Heart left ventricle (tissue), 16 donors: ENCODE measurements at regions of chr11 and their contacts with region 1.

Region 1: DNA sequence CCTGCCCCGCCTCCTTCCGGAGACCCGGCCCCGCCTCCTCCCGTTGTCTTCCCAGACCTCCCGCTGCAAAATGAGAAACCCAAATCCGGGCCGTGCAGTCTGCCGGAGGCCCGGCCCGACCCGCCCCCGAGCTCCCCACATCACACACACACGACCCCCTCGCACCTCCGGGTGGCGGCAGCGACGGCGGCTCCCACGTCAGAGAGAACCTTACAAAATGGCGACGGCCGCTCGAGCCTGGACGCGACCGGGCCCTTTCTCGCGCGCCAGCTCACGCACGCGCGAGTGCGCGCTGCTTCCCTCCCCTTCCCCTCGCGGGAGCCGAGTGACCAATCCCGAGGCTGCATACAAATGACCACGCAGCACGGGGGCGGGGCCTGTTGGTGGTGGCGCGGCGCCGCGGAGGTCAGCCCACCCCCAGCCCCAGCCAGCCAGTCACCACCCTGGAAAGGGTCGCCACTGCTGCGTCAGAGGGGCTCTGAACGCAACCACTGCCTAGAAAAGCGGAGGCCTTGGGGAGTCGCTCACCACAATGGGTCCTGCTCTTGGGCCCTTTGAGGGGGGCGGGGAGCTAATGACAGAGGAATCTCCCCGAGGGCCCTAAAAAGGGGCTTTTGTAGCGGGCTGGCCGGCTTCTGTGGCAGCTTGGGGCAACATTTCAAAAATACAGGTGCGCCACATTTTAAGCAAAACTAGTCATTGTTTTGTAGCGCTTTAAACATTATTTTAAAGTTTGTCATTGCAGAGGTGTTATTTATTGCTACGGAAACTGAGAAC is at the start of gene RBM4B:
- DNase-seq: peak; percentile 96 to 98 (median 97)
- ATAC-seq: peak; percentile 98 to 99 (median 98)
- H3K4me3 ChIP-seq: peak within 1 kb of the TSS; percentile 56 to 83 (median 72)
- H3K27ac ChIP-seq: peak within 1 kb of the TSS; percentile 84 to 98 (median 92)
- H3K4me1 ChIP-seq: peaks cover 0 to 48% (median 26%) of the 10 kb centered on the region in 12 donors
- H3K27me3 ChIP-seq: no peaks in the 10 kb centered on the region
- CTCF ChIP-seq: no peak
- POLR2A ChIP-seq: peak; percentile 70 to 91
- total RNA-seq, gene RBM4B: 8.4 to 13.3 (median 10.0) TPM

Region 2: GRCh38 chr11:66408488-66409214 is 269.1 kb before region 1 on chr11:
- intact Hi-C with region 1: loop called (anchors 1 to 10 kb)
- DNase-seq: peak; percentile 85 to 92 (median 88)
- ATAC-seq: peak; percentile 34 to 97 (median 91)
- H3K4me3 ChIP-seq: peak overlapping the region in 11 of 12 donors; percentile 10 to 63 (median 51)
- H3K27ac ChIP-seq: peak overlapping the region in 5 of 12 donors; percentile 13 to 82 (median 46)
- H3K4me1 ChIP-seq: peaks cover 0 to 11% (median 7%) of the 10 kb centered on the region in 12 donors
- H3K27me3 ChIP-seq: peaks cover 0 to 18% (median 0%) of the 10 kb centered on the region in 9 donors
- CTCF ChIP-seq: peak in 11 of 12 donors; percentile 100
- POLR2A ChIP-seq: no peak

Region 3: GRCh38 chr11:66579017-66579606 is 98.7 kb before region 1 on chr11:
- intact Hi-C with region 1: loop called (anchors 1 to 2 kb)
- DNase-seq: peak; percentile 79 to 90 (median 82)
- ATAC-seq: peak; percentile 78 to 97 (median 88)
- H3K4me3 ChIP-seq: no peak overlapping the region
- H3K27ac ChIP-seq: no peak overlapping the region
- H3K4me1 ChIP-seq: peaks cover 0 to 8% (median 0%) of the 10 kb centered on the region in 12 donors
- H3K27me3 ChIP-seq: no peaks in the 10 kb centered on the region
- CTCF ChIP-seq: peak; percentile 72 to 87 (median 82)
- POLR2A ChIP-seq: no peak

Region 4: GRCh38 chr11:66616379-66617154 is 61.2 kb before region 1 on chr11 and contains the start of gene RBM14:
- intact Hi-C with region 1: loop called in 4 of 10 experiments (anchors 1 to 10 kb)
- DNase-seq: peak; percentile 99 to 100 (median 99)
- ATAC-seq: peak; percentile 95 to 98 (median 98)
- H3K4me3 ChIP-seq: peak within 1 kb of the TSS; percentile 75 to 98 (median 86)
- H3K27ac ChIP-seq: peak within 1 kb of the TSS; percentile 62 to 98 (median 93)
- H3K4me1 ChIP-seq: peaks cover 2 to 49% (median 37%) of the 10 kb centered on the region in 12 donors
- H3K27me3 ChIP-seq: no peaks in the 10 kb centered on the region
- CTCF ChIP-seq: no peak
- POLR2A ChIP-seq: peak; percentile 45 to 97
- total RNA-seq, gene RBM14: 20.3 to 40.0 (median 30.6) TPM

Region 5: GRCh38 chr11:66638177-66639065 is 39.4 kb before region 1 on chr11 and contains the start of gene RBM4:
- intact Hi-C with region 1: loop called in 3 of 10 experiments (anchors 2 to 5 kb)
- DNase-seq: peak; percentile 96 to 99 (median 98)
- ATAC-seq: peak; percentile 97 to 99 (median 98)
- H3K4me3 ChIP-seq: peak within 1 kb of the TSS; percentile 56 to 94 (median 75)
- H3K27ac ChIP-seq: peak within 1 kb of the TSS; percentile 43 to 93 (median 88)
- H3K4me1 ChIP-seq: peaks cover 17 to 64% (median 49%) of the 10 kb centered on the region in 12 donors
- H3K27me3 ChIP-seq: no peaks in the 10 kb centered on the region
- CTCF ChIP-seq: peak in 3 of 12 donors; percentile 9 to 30 (median 28)
- POLR2A ChIP-seq: peak; percentile 59 to 83
- total RNA-seq, gene RBM4: 46.4 to 89.4 (median 56.6) TPM